ENCODE measurements at regions of chr5 and their contacts with region 1.

Region 1: GRCh38 chr5:132963175-132964104 is at the start of gene AFF4:
- DNase-seq: peak; percentile 92 to 99 (median 97)

Region 2: DNA sequence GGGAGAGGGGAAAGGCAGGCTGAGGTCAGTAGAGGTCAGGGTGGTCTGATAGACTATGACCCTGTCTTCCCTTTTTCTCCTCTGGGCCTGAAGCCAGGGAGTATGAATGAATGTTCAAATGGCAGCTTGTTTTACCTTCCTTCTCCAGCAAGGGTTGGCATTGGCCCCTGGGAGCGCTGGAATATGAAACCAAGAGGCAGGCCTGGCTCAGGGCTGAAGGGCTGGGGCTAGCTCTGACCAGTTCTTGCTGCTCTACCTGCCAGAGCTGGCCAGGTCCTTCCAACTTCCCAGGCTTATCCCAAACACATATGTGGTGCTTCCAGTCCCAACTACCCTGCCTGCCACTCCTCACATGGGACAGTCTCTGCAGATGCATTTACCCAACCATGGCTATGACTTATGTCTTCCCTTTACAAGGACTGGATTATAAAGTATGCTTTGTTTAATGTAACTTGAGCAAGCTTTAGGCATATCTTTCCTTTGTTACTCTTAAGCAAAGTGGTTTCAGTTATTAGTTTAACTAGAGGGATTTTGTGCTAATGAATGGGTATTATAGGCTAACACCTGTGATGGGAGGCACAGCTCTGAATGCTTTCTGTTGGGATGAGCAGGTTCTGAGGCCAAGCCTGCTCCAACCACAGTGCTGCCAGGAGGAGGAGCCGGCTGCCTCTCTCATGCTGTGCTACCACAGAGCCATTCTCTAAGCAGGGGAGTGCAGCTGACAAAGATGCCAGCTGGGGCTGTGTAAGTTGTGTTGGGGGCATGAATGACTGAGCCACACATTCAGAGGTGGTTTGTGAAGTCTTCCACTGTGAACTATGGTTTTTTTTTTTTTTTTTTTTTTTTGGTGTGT is 210.1 kb before region 1 on chr5:
- intact Hi-C with region 1: loop called (anchors 5 kb)
- DNase-seq: peak; percentile 61 to 90 (median 80)

Region 3: DNA sequence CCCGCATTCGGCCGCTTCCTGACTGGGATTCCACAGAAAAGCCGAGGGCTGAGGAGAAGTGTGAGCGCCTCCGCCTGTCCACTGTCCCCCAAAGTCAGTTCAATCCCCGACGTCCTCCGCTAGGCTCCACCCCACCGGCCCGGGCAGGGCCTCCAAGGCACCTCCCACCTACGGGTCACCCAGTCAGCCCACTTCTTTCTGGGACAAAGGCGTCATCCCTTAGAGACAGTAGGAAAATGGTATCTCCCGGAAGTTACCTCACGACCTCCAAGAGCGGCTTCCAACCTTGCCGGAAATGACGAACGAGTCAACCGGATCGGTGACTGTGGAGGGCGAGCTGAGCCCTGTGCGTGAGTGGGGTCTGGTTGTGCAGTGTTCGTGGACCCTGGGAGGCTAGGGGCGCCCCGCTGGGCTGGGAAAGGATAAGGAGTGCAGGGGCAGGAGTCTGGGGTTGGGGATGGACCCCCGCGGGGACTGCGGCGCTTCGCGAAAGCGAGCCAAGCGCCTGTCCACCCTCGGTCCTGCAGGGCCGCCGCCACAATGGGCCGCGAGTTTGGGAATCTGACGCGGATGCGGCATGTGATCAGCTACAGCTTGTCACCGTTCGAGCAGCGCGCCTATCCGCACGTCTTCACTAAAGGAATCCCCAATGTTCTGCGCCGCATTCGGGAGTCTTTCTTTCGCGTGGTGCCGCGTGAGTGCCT is 96.9 kb before region 1 on chr5 and contains the starts of genes GDF9 and UQCRQ:
- intact Hi-C with region 1: loop called (anchors 5 kb)
- DNase-seq: peak; percentile 91 to 100 (median 98)

Region 4: GRCh38 chr5:133025804-133026663 is 62.6 kb after region 1 on chr5 and contains the start of gene ZCCHC10:
- intact Hi-C with region 1: loop called (anchors 10 kb)
- DNase-seq: peak; percentile 85 to 97 (median 94)

Region 5: GRCh38 chr5:133051580-133052332 is 88.3 kb after region 1 on chr5 and contains the start of gene HSPA4:
- intact Hi-C with region 1: loop called (anchors 5 kb)
- DNase-seq: peak; percentile 96 to 100 (median 99)

Region 6: DNA sequence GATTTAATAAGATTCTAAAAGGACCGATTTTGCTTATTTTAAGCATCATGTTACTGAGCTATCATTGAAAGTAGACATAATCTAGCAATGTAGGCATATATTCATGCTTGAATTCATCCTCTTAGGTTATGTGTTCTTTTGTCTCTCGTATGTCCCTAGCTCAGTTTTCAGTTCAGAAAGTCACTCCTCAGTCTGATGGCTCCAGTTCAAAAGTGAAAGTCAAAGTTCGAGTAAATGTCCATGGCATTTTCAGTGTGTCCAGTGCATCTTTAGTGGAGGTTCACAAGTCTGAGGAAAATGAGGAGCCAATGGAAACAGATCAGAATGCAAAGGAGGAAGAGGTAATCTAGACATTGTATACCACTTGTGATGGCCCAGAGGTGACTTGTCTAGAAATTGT is 127.6 kb after region 1 on chr5:
- intact Hi-C with region 1: no loop called
- DNase-seq: no peak

Region 7: GRCh38 chr5:133130387-133131118 is 167.1 kb after region 1 on chr5:
- intact Hi-C with region 1: no loop called
- DNase-seq: peak in 3 of 42 donors; percentile 9 to 25 (median 18)

Region 8: DNA sequence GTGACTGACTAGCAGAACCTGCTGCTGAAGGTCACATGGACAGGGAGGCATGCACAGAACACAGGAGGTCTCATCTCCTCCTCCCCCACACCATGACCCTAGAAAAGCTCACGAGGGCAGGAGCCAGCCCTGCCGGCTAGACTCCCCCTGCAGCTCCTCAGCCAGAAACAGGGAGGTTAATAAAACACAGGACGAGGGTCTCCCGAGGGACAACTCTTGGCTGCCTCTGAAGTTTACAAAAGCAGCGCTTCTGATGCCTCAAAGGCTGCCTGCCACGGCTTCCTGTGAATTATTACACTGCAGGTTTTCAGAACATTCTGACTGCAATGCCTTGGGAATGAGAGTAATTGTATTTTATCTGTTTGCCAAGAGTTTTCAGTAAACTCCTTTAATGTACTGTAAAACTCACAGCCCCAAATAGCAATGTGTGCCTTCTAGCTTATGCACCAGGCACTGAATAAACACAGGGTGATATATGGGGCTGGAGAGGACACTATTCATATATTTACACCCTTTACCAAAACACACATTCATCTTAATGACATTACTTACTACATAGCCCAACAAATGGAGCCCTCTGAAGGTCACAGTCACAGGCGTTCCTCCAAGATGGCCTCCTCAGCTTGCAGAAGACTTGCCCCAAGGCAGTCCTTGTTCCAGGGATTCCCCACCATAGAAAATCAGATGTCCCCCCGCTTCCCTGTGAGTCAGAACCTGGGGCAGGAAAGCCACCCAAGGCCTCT is 921.3 kb after region 1 on chr5:
- intact Hi-C with region 1: no loop called
- DNase-seq: no peak